Panc1 (cell line): ENCODE measurements at regions of chr6 and their contacts with region 1.

Region 1: DNA sequence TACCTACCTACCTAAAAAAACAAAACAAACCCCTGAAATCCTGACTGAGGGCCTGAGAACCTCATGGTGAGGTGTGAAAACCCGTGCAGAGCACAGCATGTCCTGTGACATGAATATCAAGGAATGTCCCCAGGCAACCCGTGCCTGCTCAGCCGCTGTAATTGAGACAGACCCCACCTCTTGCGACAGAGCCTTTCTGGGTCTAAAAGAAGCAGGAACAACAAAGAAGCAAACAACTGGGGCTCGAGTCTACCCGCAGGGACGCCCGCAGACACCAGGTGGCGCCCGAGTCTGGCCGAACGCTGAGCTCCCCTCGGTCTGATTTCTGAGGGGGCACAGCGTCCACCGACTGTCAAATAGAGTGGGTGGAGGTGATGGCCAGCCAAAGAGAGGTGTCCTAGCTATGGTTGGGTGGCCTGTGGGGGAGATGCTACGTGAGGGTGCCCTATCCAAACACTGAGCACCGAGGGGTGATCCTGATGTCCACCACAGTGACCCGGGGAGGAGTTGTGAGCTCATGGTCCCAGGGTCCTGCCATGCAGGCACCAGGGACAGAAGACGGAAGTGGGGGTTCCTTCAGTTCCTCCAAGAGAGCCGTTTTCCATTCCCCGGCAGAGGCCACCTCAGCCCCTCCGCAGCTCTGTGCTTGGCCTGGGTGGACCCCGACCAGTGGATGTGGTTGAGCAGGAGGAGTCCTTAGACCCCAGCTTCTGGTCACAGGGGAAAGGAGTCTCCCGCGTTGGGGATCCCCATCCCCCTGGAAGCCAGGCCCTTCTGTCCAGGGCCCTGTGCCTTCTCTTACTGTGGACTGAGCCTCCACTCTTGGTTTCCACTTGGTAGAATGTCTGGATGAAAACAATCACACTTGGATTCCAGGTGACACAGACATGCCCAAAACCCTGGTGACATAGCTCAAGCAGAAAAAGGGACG is 268.2 kb downstream of the CDC5L start:
- DNase-seq: no peak
- ATAC-seq: peak; percentile 79
- H3K4me3 ChIP-seq: no peak overlapping the region
- H3K27ac ChIP-seq: peak overlapping the region; percentile 23; the same call in 1 of the 2 replicates
- H3K4me1 ChIP-seq: no peaks in the 10 kb centered on the region; the same call in 1 of the 2 replicates
- H3K27me3 ChIP-seq: no peaks in the 10 kb centered on the region
- CTCF ChIP-seq: peak; percentile 97

Region 2: GRCh38 chr6:45187836-45188235 is 532.2 kb after region 1 on chr6:
- CTCF ChIA-PET with region 1: interaction called, 13 read pairs
- POLR2A ChIA-PET with region 1: no interaction called
- in situ Hi-C with region 1: no loop called
- intact Hi-C with region 1: no loop called
- DNase-seq: no peak
- ATAC-seq: no peak
- H3K4me3 ChIP-seq: no peak overlapping the region
- H3K27ac ChIP-seq: no peak overlapping the region
- H3K4me1 ChIP-seq: no peaks in the 10 kb centered on the region
- H3K27me3 ChIP-seq: no peaks in the 10 kb centered on the region
- CTCF ChIP-seq: no peak

Region 3: GRCh38 chr6:45388328-45388727 is 732.7 kb after region 1 on chr6:
- CTCF ChIA-PET with region 1: no interaction called
- POLR2A ChIA-PET with region 1: no interaction called
- in situ Hi-C with region 1: no loop called
- intact Hi-C with region 1: loop called (anchors 10 kb)
- DNase-seq: no peak
- ATAC-seq: no peak
- H3K4me3 ChIP-seq: no peak overlapping the region
- H3K27ac ChIP-seq: no peak overlapping the region
- H3K4me1 ChIP-seq: no peaks in the 10 kb centered on the region
- H3K27me3 ChIP-seq: no peaks in the 10 kb centered on the region
- CTCF ChIP-seq: no peak

Region 4: DNA sequence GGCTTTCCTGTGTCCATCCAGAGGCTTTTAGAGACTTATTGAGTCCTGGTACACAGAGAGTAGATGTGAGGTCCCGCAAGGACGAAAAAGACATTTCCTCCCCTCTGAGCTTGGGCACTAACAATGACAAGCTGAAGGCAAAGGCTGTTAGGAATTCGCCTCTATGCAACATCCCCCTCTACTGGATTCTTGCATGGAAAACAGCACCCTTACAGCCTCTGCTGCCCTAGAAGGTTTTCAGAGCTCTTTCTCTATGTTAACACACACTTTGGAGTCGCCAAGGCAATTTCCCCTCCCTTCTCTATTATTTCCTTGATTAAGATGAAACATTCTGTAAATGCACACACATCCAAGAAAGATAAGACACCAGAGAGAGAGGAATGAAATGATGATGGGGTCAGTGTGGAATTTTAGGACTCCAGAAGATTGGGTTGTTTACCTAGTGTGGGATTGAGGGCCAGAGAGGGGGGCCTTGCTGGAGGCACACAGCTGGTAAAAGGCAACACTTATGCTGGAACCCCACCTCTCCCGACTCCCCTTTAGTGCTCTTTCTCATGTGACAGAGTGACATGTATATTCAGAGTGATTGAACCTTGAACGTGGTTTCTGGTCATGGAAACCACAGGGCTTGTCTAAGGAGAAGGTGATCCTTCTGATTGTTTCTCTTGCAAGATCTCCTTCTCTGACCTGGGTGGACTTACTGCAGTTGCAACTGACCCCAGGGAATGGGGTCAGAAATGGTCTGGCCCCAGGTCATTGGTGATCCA is 1059.2 kb after region 1 on chr6:
- CTCF ChIA-PET with region 1: interaction called, 7 read pairs
- POLR2A ChIA-PET with region 1: no interaction called
- in situ Hi-C with region 1: no loop called
- intact Hi-C with region 1: loop called (anchors 2 kb)
- DNase-seq: peak; percentile 82
- ATAC-seq: peak; percentile 97
- H3K4me3 ChIP-seq: no peak overlapping the region
- H3K27ac ChIP-seq: peak overlapping the region; percentile 54; the same call in 1 of the 2 replicates
- H3K4me1 ChIP-seq: no peaks in the 10 kb centered on the region
- H3K27me3 ChIP-seq: no peaks in the 10 kb centered on the region
- CTCF ChIP-seq: peak; percentile 91

Region 5: GRCh38 chr6:45922728-45923351 is 1267.2 kb after region 1 on chr6:
- CTCF ChIA-PET with region 1: interaction called, 8 read pairs
- POLR2A ChIA-PET with region 1: no interaction called
- in situ Hi-C with region 1: no loop called
- intact Hi-C with region 1: loop called (anchors 5 kb)
- DNase-seq: peak; percentile 56
- ATAC-seq: peak; percentile 94
- H3K4me3 ChIP-seq: no peak overlapping the region
- H3K27ac ChIP-seq: no peak overlapping the region
- H3K4me1 ChIP-seq: no peaks in the 10 kb centered on the region
- H3K27me3 ChIP-seq: peaks cover 2% of the 10 kb centered on the region; the same call in 1 of the 2 replicates
- CTCF ChIP-seq: peak; percentile 89